ENCODE measurements at regions of chr1 and their contacts with region 1.

Region 1: GRCh38 chr1:16078925-16079656 is 5.6 kb upstream of the FAM131C start:
- DNase-seq: peak; percentile 84
- ATAC-seq: peak; percentile 89
- H3K4me3 Mint-ChIP-seq: peak overlapping the region; percentile 56
- H3K27ac Mint-ChIP-seq: peak overlapping the region; percentile 83
- H3K4me1 Mint-ChIP-seq: peaks cover 14% of the 10 kb centered on the region
- H3K27me3 Mint-ChIP-seq: peaks cover 5% of the 10 kb centered on the region

Region 2: DNA sequence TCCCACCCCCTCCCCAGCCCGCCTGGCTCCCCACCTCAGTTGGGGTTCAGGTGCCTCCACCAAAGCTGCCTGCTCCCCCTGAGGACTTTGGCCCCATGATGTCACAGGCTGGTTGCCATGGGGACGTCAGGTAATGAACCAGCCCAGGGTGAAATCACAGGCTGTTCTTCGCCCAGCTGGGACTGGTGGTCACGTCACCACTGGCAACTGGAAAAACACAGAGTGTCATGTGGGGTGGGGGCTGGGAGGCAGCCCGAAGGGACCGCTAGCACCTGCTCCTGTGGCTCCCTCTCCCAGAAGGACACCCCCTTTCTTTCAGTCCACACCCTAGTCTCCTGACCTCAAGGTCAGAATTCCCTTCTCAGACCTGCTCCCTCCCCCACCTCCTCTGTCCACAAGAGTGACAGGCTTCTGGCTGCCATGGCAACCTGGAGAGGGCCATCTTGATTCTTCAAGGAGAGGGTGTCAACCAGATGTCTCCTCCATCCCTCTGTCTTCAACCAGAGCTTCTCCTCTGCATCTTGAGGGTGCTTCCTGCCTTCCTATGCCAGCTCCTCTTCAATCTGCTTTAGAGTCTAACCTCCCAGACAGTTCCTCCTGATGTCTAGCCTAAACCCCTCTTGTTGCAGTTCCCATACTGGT is 11.8 kb before region 1 on chr1:
- CTCF ChIA-PET with region 1: interaction called, 47 read pairs
- POLR2A ChIA-PET with region 1: interaction called, 3 read pairs
- DNase-seq: peak; percentile 54
- ATAC-seq: peak; percentile 25
- H3K4me3 Mint-ChIP-seq: no peak overlapping the region
- H3K27ac Mint-ChIP-seq: peak overlapping the region; percentile 57
- H3K4me1 Mint-ChIP-seq: peaks cover 86% of the 10 kb centered on the region
- H3K27me3 Mint-ChIP-seq: peaks cover 4% of the 10 kb centered on the region

Region 3: GRCh38 chr1:16164213-16165072 is 85.4 kb after region 1 on chr1:
- CTCF ChIA-PET with region 1: interaction called, 16 read pairs
- POLR2A ChIA-PET with region 1: no interaction called
- DNase-seq: no peak
- ATAC-seq: no peak
- H3K4me3 Mint-ChIP-seq: no peak overlapping the region
- H3K27ac Mint-ChIP-seq: peak overlapping the region; percentile 5
- H3K4me1 Mint-ChIP-seq: peaks cover 53% of the 10 kb centered on the region
- H3K27me3 Mint-ChIP-seq: peaks cover 23% of the 10 kb centered on the region

Region 4: DNA sequence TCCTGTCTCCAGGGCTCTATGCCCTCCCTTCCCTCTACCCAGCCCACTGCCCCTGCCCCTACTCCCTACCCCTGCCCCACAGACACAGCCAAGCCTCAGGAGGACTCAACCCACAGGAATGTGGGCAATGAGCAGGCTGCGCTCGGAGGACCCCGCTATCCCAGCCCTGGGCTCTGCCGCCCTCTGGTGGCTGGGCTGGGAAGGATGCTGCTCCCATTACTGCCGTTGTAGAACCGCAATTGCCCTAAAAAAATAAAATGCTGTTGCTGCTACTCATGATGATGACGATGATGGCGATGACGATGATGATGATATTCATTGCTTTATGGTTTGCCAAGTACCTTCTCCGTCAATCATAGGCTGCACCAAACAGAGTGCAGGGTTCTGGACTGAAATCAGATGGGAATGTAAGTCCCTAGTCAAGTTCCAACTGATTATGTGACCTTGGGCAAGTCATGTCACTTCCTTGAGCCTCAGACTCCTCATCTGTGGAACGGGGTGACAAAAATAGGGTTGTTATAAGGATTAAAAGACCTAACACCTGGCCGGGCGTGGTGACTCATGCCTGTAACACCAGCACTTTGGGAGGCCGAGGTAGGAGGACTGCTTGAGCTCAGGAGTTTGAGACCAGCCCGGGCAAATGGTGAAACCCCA is 108.8 kb after region 1 on chr1:
- CTCF ChIA-PET with region 1: interaction called, 244 read pairs
- POLR2A ChIA-PET with region 1: interaction called, 4 read pairs
- DNase-seq: peak; percentile 81
- ATAC-seq: peak; percentile 93
- H3K4me3 Mint-ChIP-seq: no peak overlapping the region
- H3K27ac Mint-ChIP-seq: no peak overlapping the region
- H3K4me1 Mint-ChIP-seq: no peaks in the 10 kb centered on the region
- H3K27me3 Mint-ChIP-seq: peaks cover 10% of the 10 kb centered on the region

Region 5: DNA sequence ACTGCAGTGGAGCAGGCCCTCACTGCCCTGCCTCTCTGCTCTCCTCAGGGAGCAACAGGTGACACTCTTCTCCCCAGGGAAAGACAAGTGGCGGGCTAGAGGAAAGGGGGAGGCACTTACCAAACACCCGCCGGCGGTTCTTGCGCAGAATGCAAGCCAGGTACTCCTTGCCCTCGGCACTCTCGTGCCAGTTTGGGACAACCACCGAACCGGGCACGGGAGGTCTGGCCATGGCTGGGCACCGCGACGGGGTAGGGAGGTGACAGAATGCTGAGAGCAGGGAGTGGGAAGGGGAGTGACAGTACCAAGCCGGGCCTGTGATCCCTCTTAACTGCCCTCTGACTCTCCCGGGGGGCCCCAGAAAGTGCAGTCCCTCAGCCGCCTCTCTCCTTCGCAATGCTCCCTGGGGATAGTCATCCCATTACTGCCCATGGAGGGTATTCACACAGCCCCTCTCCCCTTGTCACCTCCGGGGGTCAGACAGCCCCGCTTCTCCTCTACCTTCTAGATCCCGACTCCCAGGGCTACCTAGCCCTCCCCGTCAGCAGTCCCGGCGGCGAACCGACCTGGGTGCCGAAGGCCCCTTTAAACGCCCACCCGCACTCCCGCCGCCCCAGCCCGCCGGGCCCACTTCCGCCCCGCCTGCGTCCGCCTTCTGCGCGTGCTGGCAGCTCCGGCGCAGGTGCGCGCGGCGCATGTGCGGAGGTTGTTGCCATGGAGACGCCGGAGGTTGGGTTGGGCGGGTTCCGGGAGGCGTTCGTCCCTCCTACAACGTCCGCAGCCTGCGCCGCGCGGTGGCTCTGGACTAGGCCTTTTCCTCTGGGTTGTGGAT is 157.6 kb after region 1 on chr1 and contains the start of gene CPLANE2:
- CTCF ChIA-PET with region 1: interaction called, 17 read pairs
- POLR2A ChIA-PET with region 1: no interaction called
- DNase-seq: peak; percentile 98
- ATAC-seq: peak; percentile 89
- H3K4me3 Mint-ChIP-seq: peak within 1 kb of the TSS; percentile 84
- H3K27ac Mint-ChIP-seq: peak within 1 kb of the TSS; percentile 87
- H3K4me1 Mint-ChIP-seq: peaks cover 34% of the 10 kb centered on the region
- H3K27me3 Mint-ChIP-seq: no peaks in the 10 kb centered on the region
- total RNA-seq, gene CPLANE2: 5.1 to 6.1 TPM

Region 6: GRCh38 chr1:16366722-16367257 is 287.7 kb after region 1 on chr1 and contains the start of gene SZRD1:
- CTCF ChIA-PET with region 1: interaction called, 43 read pairs
- POLR2A ChIA-PET with region 1: no interaction called
- DNase-seq: peak; percentile 98
- ATAC-seq: peak; percentile 89
- H3K4me3 Mint-ChIP-seq: peak within 1 kb of the TSS; percentile 97
- H3K27ac Mint-ChIP-seq: peak within 1 kb of the TSS; percentile 100
- H3K4me1 Mint-ChIP-seq: peaks cover 43% of the 10 kb centered on the region
- H3K27me3 Mint-ChIP-seq: no peaks in the 10 kb centered on the region
- total RNA-seq, gene SZRD1: 171 to 176 TPM

Measured in activated CD8-positive, alpha-beta T cell treated with anti-CD3 and anti-CD28 coated beads, Interleukin-2, amount 10 ng/mL, durations not matched to agents 7 days and 5 days (primary cell).